ENCODE measurements at regions of chr4 and their contacts with region 1.

Region 1: GRCh38 chr4:86918539-86919072 is 16.2 kb upstream of the AFF1 start:
- DNase-seq: peak in 1 of 2 experiments; percentile 19
- ATAC-seq: peak; percentile 19 to 36; a peak in 1 of 6 replicates
- H3K4me3 ChIP-seq: no peak overlapping the region
- H3K27ac ChIP-seq: 0 out of 6 replicates have a peak overlapping the region, but pooled peaks of 1 of the 2 experiments have one; percentile 18
- H3K4me1 ChIP-seq: peaks cover 7% of the 10 kb centered on the region; the same call in 1 of the 3 replicates
- CTCF ChIP-seq: no peak
- EP300 ChIP-seq: no peak
- POLR2A ChIP-seq: no peak
- RAD21 ChIP-seq: no peak

Region 2: GRCh38 chr4:86942185-86942666 is 23.6 kb after region 1 on chr4:
- CTCF ChIA-PET with region 1: interaction called, 18 read pairs
- POLR2A ChIA-PET with region 1: interaction called, 23 read pairs
- DNase-seq: peak in 1 of 2 experiments; percentile 27
- ATAC-seq: peak; percentile 39 to 65; a peak in 3 of 6 replicates
- H3K4me3 ChIP-seq: no peak overlapping the region
- H3K27ac ChIP-seq: no peak overlapping the region
- H3K4me1 ChIP-seq: peaks cover 52% of the 10 kb centered on the region
- CTCF ChIP-seq: no peak
- EP300 ChIP-seq: no peak
- POLR2A ChIP-seq: no peak
- RAD21 ChIP-seq: no peak

Region 3: GRCh38 chr4:87006676-87007527 is 88.3 kb after region 1 on chr4:
- CTCF ChIA-PET with region 1: interaction called, 13 read pairs
- POLR2A ChIA-PET with region 1: interaction called, 8 read pairs
- DNase-seq: peak; percentile 53 to 90
- ATAC-seq: peak; percentile 92 to 94
- H3K4me3 ChIP-seq: peak overlapping the region; percentile 81
- H3K27ac ChIP-seq: peak overlapping the region; percentile 94 to 97
- H3K4me1 ChIP-seq: peaks cover 46% of the 10 kb centered on the region
- CTCF ChIP-seq: peak; percentile 5; the same call in 1 of the 3 replicates
- EP300 ChIP-seq: no peak
- POLR2A ChIP-seq: peak; percentile 98
- RAD21 ChIP-seq: peak; percentile 1 to 21; a peak in 2 of 5 replicates

Region 4: DNA sequence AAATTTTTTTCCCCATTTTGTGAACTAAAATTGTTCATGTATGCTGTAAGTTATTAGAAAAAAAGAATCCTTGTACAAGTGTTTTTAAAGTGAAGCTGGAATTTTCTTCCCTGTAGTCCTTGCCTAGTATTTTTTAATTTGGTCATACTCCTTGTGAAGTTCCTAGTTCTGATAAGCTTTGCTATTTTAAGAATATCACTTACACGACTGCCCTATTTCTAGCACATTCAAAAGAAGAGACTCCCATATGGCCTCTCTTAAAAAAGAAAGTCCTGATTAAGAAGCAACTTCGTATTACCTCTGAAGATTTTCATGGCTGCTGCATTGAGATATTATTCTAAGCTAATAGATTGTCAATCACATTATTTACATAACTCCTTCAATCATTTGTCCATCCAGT is 214.6 kb after region 1 on chr4:
- CTCF ChIA-PET with region 1: interaction called, 11 read pairs
- POLR2A ChIA-PET with region 1: no interaction called
- DNase-seq: no peak
- ATAC-seq: no peak
- H3K4me3 ChIP-seq: no peak overlapping the region
- H3K27ac ChIP-seq: no peak overlapping the region
- H3K4me1 ChIP-seq: 0 out of 3 replicates have a peak, but pooled peaks cover 6% of the 10 kb centered on the region
- CTCF ChIP-seq: no peak
- EP300 ChIP-seq: no peak
- POLR2A ChIP-seq: no peak
- RAD21 ChIP-seq: no peak